ENCODE measurements at regions of chr5 and their contacts with region 1.

Region 1: GRCh38 chr5:180315762-180316212 is 23.9 kb upstream of the MAPK9 start:
- DNase-seq: peak; percentile 45 to 83 (median 66)
- H3K4me3 ChIP-seq: no peak overlapping the region
- H3K4me3 Mint-ChIP-seq: no peak overlapping the region
- H3K27ac ChIP-seq: no peak overlapping the region
- H3K27ac Mint-ChIP-seq: no peak overlapping the region
- H3K4me1 ChIP-seq: no peaks in the 10 kb centered on the region
- H3K4me1 Mint-ChIP-seq: peaks cover 0 to 14% (median 0%) of the 10 kb centered on the region in 3 donors
- H3K27me3 ChIP-seq: no peaks in the 10 kb centered on the region
- H3K27me3 Mint-ChIP-seq: peaks cover 4 to 5% of the 10 kb centered on the region in 2 donors

Region 2: DNA sequence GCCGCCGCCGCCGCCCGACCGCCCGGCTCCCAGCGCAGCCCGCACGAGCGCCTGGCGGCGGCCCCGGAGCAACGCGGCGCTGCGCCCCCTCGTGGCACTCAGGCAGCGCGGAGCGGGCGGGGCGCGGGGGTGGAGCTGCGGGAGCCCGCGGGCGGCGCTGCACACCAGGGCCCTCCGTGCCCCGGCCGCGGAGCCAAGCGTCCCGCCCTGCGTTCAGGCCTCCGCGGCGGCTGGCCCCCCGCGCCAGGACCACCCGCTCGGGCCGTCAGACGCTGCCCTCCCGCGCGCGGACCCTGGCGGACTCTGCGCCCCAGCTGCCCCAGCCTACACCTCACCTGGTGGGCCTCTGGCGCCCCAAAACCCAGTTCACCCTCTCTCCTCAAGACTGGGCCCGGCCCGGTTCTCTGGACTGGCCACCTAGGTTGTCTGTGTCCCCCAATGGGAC is 106.6 kb before region 1 on chr5 and contains the start of gene RASGEF1C:
- CTCF ChIA-PET with region 1: interaction called, 10 read pairs
- POLR2A ChIA-PET with region 1: no interaction called
- DNase-seq: peak in 4 of 5 donors; percentile 33 to 51 (median 41)
- H3K4me3 ChIP-seq: peak within 1 kb of the TSS; percentile 28
- H3K4me3 Mint-ChIP-seq: peak within 1 kb of the TSS in 6 of 7 donors; percentile 30 to 86 (median 58)
- H3K27ac ChIP-seq: no peak within 1 kb of the TSS
- H3K27ac Mint-ChIP-seq: no peak within 1 kb of the TSS
- H3K4me1 ChIP-seq: no peaks in the 10 kb centered on the region
- H3K4me1 Mint-ChIP-seq: peaks cover 5 to 10% (median 7%) of the 10 kb centered on the region in 3 donors
- H3K27me3 ChIP-seq: peaks cover 10% of the 10 kb centered on the region
- H3K27me3 Mint-ChIP-seq: peaks cover 31 to 51% of the 10 kb centered on the region in 2 donors
- total RNA-seq, gene RASGEF1C: not detected

Region 3: GRCh38 chr5:180291943-180292831 is 23.6 kb before region 1 on chr5 and contains the start of gene MAPK9:
- CTCF ChIA-PET with region 1: interaction called, 133 read pairs
- POLR2A ChIA-PET with region 1: interaction called, 19 read pairs
- DNase-seq: peak; percentile 82 to 92 (median 85)
- H3K4me3 ChIP-seq: peak within 1 kb of the TSS; percentile 59
- H3K4me3 Mint-ChIP-seq: peak within 1 kb of the TSS; percentile 93 to 99 (median 97)
- H3K27ac ChIP-seq: peak within 1 kb of the TSS; percentile 84
- H3K27ac Mint-ChIP-seq: peak within 1 kb of the TSS; percentile 97 to 100 (median 99)
- H3K4me1 ChIP-seq: peaks cover 29% of the 10 kb centered on the region
- H3K4me1 Mint-ChIP-seq: peaks cover 40 to 75% (median 64%) of the 10 kb centered on the region in 3 donors
- H3K27me3 ChIP-seq: no peaks in the 10 kb centered on the region
- H3K27me3 Mint-ChIP-seq: peaks cover 0 to 1% of the 10 kb centered on the region in 2 donors
- total RNA-seq, gene MAPK9: 44.3 to 46.2 TPM

Region 4: GRCh38 chr5:180304431-180305375 is 11.1 kb before region 1 on chr5:
- CTCF ChIA-PET with region 1: interaction called, 30 read pairs
- POLR2A ChIA-PET with region 1: no interaction called
- DNase-seq: no peak
- H3K4me3 ChIP-seq: no peak overlapping the region
- H3K4me3 Mint-ChIP-seq: no peak overlapping the region
- H3K27ac ChIP-seq: no peak overlapping the region
- H3K27ac Mint-ChIP-seq: no peak overlapping the region
- H3K4me1 ChIP-seq: no peaks in the 10 kb centered on the region
- H3K4me1 Mint-ChIP-seq: no peaks in the 10 kb centered on the region
- H3K27me3 ChIP-seq: no peaks in the 10 kb centered on the region
- H3K27me3 Mint-ChIP-seq: peaks cover 3 to 8% of the 10 kb centered on the region in 2 donors

Region 5: DNA sequence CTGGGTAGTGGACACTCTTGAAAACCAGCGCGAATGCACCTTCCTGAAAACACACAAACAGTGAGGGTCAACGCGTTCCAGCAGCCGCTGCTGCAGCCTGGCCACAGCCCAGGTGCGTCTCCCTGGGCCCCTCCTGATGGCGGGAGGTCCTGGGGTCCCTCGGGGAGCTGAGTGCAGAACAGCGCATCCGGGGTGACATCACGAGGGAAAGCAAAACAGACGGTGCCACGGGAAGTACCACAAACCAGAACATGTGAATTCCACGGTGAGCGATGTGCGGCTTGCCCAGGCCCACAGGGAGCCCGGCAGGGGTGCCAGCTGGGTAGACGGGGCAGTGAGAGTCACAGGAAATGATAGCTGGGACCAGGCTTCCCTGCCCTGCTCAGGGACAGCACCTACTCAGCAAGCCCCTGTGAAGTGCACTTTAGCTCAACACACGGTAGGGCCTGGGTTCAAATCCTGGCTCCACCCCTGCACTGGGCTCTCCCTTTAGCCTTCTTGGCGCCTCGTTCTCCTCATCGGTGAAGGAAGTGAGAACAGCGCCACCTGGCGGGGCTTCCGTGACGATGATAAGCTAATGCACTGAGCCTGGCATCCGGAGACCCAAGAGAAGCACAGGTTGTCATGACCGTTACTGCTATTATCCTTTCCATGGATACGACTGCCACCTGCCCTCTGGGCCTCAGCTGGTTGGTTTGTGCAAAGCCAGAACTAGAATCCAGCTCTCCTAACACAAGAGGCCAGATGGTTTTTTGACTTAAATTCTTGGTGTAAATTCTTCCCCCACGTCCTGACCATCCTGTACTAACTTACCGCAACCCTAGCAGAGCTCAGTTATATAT is 12.7 kb after region 1 on chr5:
- CTCF ChIA-PET with region 1: interaction called, 45 read pairs
- POLR2A ChIA-PET with region 1: no interaction called
- DNase-seq: peak; percentile 63 to 88 (median 78)
- H3K4me3 ChIP-seq: no peak overlapping the region
- H3K4me3 Mint-ChIP-seq: no peak overlapping the region
- H3K27ac ChIP-seq: no peak overlapping the region
- H3K27ac Mint-ChIP-seq: no peak overlapping the region
- H3K4me1 ChIP-seq: no peaks in the 10 kb centered on the region
- H3K4me1 Mint-ChIP-seq: peaks cover 1 to 4% (median 3%) of the 10 kb centered on the region in 3 donors
- H3K27me3 ChIP-seq: no peaks in the 10 kb centered on the region
- H3K27me3 Mint-ChIP-seq: peaks cover 6 to 8% of the 10 kb centered on the region in 2 donors

Region 6: GRCh38 chr5:180723936-180724335 is 408.1 kb after region 1 on chr5:
- CTCF ChIA-PET with region 1: no interaction called
- POLR2A ChIA-PET with region 1: no interaction called
- DNase-seq: peak in 1 of 5 donors; percentile 4
- H3K4me3 ChIP-seq: no peak overlapping the region
- H3K4me3 Mint-ChIP-seq: peak overlapping the region in 3 of 7 donors; percentile 24 to 65 (median 25)
- H3K27ac ChIP-seq: no peak overlapping the region
- H3K27ac Mint-ChIP-seq: peak overlapping the region in 4 of 8 donors; percentile 79 to 88 (median 84)
- H3K4me1 ChIP-seq: no peaks in the 10 kb centered on the region
- H3K4me1 Mint-ChIP-seq: peaks cover 5 to 18% (median 18%) of the 10 kb centered on the region in 3 donors
- H3K27me3 ChIP-seq: no peaks in the 10 kb centered on the region
- H3K27me3 Mint-ChIP-seq: peaks cover 10 to 42% of the 10 kb centered on the region in 2 donors

Measured in CD8-positive, alpha-beta memory T cell (primary cell).